H1 (cell line): ENCODE measurements at regions of chr1 and their contacts with region 1.

Region 1: GRCh38 chr1:11749203-11749689 is 12.7 kb upstream of the C1orf167 start:
- DNase-seq: peak in 1 of 2 experiments; percentile 72
- H3K4me3 ChIP-seq: no peak overlapping the region
- H3K27ac ChIP-seq: no peak overlapping the region
- H3K4me1 ChIP-seq: peaks cover 0 to 16% (median 5%) of the 10 kb centered on the region in 4 experiments; a peak in 5 of 7 replicates
- H3K27me3 ChIP-seq: no peaks in the 10 kb centered on the region
- CTCF ChIP-seq: peak; percentile 68 to 89 (median 77)
- EP300 ChIP-seq: no peak
- POLR2A ChIP-seq: no peak
- RAD21 ChIP-seq: peak; percentile 83 to 86

Region 2: DNA sequence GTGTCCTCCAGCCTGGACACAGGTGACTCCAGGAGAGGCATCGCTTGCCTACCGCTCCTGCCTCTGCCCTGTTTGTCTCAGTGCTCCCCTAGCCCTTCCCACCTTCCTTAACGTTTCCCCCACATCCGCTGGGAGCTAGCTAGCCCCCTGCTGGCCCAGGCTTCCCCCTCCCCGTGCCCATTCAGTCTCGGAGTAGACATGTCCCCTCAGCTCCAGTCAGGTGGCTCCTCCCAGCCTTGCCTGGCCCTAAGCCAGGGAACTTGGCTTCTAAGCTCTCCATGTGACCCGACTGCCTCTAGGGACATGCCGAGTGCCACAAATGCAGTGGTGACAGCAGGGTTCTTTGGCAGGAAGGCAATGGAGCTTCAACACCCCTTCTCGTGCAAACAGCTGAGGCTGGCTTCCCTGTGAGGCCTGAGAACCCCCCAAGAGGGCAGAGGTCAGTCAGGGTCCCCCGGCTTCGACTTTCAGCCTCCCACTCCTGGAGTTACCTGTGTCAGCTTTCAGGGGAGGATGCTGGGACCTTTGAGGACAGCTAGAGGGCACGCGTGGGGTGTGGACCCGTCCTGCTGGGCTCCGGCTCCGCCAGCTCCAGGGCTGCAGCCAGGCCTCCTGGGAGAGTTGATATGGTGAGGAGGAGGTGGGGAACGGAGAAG is 41.5 kb before region 1 on chr1:
- CTCF ChIA-PET with region 1: interaction called, 12 read pairs
- POLR2A ChIA-PET with region 1: interaction called, 4 read pairs
- DNase-seq: no peak
- H3K4me3 ChIP-seq: no peak overlapping the region
- H3K27ac ChIP-seq: no peak overlapping the region
- H3K4me1 ChIP-seq: peaks cover 7 to 36% (median 26%) of the 10 kb centered on the region in 4 experiments
- H3K27me3 ChIP-seq: no peaks in the 10 kb centered on the region
- CTCF ChIP-seq: no peak
- EP300 ChIP-seq: no peak
- POLR2A ChIP-seq: no peak
- RAD21 ChIP-seq: no peak

Region 3: GRCh38 chr1:11735854-11736745 is 13.1 kb before region 1 on chr1 and contains the start of gene AGTRAP:
- CTCF ChIA-PET with region 1: interaction called, 21 read pairs
- POLR2A ChIA-PET with region 1: interaction called, 11 read pairs
- DNase-seq: peak; percentile 79 to 96
- H3K4me3 ChIP-seq: peak within 1 kb of the TSS; percentile 58 to 86 (median 80)
- H3K27ac ChIP-seq: peak within 1 kb of the TSS; percentile 83
- H3K4me1 ChIP-seq: peaks cover 10 to 39% (median 13%) of the 10 kb centered on the region in 4 experiments
- H3K27me3 ChIP-seq: no peaks in the 10 kb centered on the region
- CTCF ChIP-seq: peak in 2 of 3 experiments; percentile 8 to 23; a peak in 2 of 4 replicates
- EP300 ChIP-seq: peak in 1 of 2 experiments; percentile 53; a peak in 1 of 3 replicates
- POLR2A ChIP-seq: peak in 1 of 2 experiments; percentile 73; a peak in 2 of 3 replicates
- RAD21 ChIP-seq: no peak
- total RNA-seq, gene AGTRAP: 69.7 and 70.9 TPM in 2 replicates

Region 4: DNA sequence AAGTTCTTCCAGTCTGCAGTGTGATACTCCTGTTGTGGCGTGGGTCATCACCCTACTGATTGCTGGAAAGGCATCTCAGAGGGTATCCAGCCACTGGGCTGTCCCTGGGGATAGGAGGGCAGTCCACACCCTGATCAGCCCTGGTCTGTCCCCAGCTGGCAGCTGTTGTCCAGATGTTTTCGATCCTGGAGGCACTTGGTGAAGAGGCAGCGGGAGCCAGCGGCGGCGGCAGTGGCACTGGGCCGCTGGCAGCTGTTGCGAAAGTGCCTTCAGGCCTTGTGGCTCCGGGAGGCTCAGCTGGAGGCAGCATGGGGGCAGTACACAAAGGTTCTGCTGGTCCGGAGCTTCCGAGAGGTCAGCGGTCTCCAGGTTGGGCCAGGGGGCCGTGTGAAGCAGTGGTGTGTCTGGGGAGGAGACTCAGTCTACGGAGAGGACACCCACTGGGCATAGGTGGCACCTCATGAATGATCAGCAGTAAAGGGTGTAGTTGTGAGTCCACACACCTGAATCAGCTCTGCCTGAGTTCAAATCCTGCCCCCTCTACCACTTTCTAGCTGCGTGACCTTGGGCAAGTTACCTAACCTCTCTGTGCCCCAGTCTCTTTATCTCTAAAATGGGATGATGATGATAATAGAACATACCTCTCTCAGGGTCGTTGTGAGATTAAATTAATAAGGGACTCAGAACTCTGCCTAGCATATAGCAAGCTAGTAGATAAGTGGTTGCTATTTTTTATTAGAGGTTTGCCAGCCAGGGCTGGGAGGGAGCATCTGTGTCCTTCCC is 18.9 kb after region 1 on chr1:
- CTCF ChIA-PET with region 1: interaction called, 8 read pairs
- POLR2A ChIA-PET with region 1: interaction called, 21 read pairs
- DNase-seq: no peak
- H3K4me3 ChIP-seq: no peak overlapping the region
- H3K27ac ChIP-seq: no peak overlapping the region
- H3K4me1 ChIP-seq: no peaks in the 10 kb centered on the region; a peak in 1 of 7 replicates
- H3K27me3 ChIP-seq: peaks cover 0 to 15% (median 3%) of the 10 kb centered on the region in 4 experiments; a peak in 4 of 7 replicates
- CTCF ChIP-seq: no peak
- EP300 ChIP-seq: no peak
- POLR2A ChIP-seq: no peak
- RAD21 ChIP-seq: no peak